Activated CD4-positive, alpha-beta T cell treated with anti-CD3 and anti-CD28 coated beads, Interleukin-2, amount 10 ng/mL, durations not matched to agents 24 days and 14 days (primary cell): ENCODE measurements at regions of chr9 and their contacts with region 1.

Region 1: GRCh38 chr9:71675129-71675856 is 93.0 kb downstream of the CEMIP2 start:
- DNase-seq: no peak
- H3K4me3 Mint-ChIP-seq: no peak overlapping the region
- H3K27ac Mint-ChIP-seq: no peak overlapping the region
- H3K4me1 Mint-ChIP-seq: peaks cover 12% of the 10 kb centered on the region
- H3K27me3 Mint-ChIP-seq: no peaks in the 10 kb centered on the region

Region 2: GRCh38 chr9:71642056-71642455 is 33.2 kb before region 1 on chr9:
- intact Hi-C with region 1: loop called (anchors 5 kb)
- DNase-seq: no peak
- H3K4me3 Mint-ChIP-seq: no peak overlapping the region
- H3K27ac Mint-ChIP-seq: no peak overlapping the region
- H3K4me1 Mint-ChIP-seq: peaks cover 35% of the 10 kb centered on the region
- H3K27me3 Mint-ChIP-seq: peaks cover 5% of the 10 kb centered on the region

Region 3: DNA sequence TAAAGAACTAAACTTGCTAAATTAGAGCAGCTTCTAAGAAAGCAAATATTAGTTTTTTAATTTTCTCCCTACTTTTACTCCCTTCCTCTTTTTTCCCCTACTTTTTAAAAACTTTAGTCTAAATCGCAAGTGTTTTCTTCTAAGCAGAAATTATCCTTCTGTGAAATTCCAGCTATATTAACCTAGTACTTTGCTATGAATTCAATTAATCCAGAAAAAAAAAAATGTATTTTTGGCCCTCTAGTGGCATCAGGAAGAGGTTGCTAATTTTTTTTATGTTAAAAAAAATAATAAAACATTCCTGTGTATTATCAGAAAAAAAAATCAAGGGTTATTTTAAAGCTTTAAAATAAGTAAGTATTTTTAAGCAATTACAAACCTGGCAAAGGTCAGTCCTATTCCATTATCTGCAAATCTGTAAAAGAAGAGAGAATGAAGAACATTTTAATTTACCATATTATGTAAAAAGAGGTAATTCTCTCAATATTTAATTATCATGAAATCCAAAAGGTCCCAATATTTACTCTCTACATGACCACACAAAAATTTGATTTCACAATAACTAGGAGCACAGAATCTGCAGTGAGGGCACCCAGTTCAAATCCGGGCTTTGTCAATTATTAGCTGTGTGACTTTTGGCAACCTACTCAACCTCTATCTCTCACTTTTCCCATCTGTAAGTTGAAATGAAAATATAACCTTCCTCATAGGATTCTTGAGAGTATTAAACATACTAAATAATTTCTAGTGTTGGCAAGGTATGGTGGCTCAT is 41.0 kb after region 1 on chr9:
- intact Hi-C with region 1: no loop called
- DNase-seq: no peak
- H3K4me3 Mint-ChIP-seq: no peak overlapping the region
- H3K27ac Mint-ChIP-seq: no peak overlapping the region
- H3K4me1 Mint-ChIP-seq: peaks cover 6% of the 10 kb centered on the region
- H3K27me3 Mint-ChIP-seq: no peaks in the 10 kb centered on the region